ENCODE measurements at regions of chr2 and their contacts with region 1.

Region 1: DNA sequence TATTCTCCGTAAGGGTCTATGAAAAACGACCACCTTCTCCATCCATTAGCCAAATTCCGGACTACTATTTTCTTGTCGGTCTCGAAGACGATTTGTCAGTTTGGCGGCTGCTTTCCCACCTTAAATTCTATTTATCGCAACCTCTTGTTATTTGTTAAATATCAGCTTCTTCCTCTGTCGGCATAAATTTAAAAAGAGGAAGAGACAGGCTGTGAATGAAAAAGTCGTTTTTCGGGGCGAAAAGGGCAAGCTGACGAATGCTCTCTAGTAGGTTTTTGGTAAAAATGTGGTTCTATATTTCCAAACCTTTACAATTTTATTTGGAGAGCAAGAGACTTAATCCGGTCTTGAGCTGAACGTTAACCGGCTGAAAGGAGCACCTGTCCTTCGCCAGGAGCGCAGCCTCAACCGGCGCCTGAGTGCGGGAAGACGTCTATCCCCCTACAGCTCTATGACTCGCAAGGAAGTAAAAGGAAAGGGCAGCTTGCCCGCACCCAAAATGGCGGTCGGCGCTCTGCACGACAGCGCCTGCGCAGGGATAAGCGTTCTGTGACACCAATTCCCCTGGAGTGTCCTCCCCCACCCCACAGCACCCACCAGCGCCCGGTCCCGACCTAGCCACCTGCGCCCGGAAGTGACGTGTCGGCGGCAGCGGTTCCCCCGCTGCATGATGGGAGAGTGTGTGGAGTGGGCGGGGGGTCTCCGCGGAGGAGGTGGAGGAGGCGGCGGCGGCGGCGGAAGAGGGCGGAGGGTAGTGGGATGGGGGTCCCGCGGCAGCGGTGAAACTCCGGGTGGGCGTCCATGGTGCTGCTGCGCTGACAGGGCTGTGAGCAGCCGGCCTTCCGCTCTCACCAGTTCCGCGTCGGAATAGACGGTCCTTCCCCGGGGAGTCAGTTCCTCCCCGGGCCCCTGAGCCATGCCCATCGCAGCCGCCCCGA is at the start of gene AFTPH:
- DNase-seq: peak; percentile 100
- H3K4me3 ChIP-seq: peak within 1 kb of the TSS; percentile 93 to 98 (median 97)
- H3K27ac ChIP-seq: peak within 1 kb of the TSS; percentile 82
- H3K4me1 ChIP-seq: peaks cover 12% of the 10 kb centered on the region
- H3K27me3 ChIP-seq: peaks cover 7 to 8% of the 10 kb centered on the region in 2 experiments
- CTCF ChIP-seq: no peak
- POLR2A ChIP-seq: peak; percentile 46
- total RNA-seq, gene AFTPH: 15.3 and 16.7 TPM in 2 replicates

Region 2: DNA sequence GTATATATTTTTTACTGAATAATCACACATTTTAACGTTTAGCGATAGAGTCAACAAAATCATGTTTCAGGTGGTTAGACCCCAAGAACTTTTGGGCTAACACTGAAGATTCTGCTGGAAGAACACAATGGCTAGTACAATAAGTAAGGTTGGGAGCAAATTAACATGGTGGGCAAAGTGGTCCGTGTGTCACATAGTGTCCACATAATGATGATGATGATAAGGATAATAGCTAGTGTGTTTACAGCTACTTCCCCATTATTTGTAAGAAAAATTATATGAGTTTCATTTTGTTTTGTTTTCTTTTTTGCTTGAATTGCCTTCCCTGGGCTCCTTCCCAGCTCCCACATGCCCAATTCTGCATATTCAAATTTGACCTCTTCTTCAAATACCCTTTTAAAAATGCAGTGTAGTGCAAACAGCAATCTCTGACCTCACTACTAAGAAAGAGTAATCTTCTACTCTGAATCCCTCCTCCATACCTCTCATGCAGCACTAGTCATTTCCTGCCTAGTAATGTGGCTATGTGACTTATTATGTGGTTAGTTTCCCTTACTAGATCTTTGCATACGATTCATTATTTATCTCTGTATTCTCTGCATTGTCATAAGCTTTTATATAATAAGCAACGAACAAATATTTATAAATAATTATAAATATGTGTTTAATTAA is 487.8 kb before region 1 on chr2:
- CTCF ChIA-PET with region 1: no interaction called
- POLR2A ChIA-PET with region 1: no interaction called
- dilution Hi-C with region 1: no loop called
- intact Hi-C with region 1: loop called (anchors 10 kb)
- DNase-seq: peak; percentile 61
- H3K4me3 ChIP-seq: no peak overlapping the region
- H3K27ac ChIP-seq: no peak overlapping the region
- H3K4me1 ChIP-seq: peaks cover 15% of the 10 kb centered on the region
- H3K27me3 ChIP-seq: no peaks in the 10 kb centered on the region
- CTCF ChIP-seq: no peak
- POLR2A ChIP-seq: no peak

Region 3: GRCh38 chr2:64404002-64404731 is 119.8 kb before region 1 on chr2:
- CTCF ChIA-PET with region 1: no interaction called
- POLR2A ChIA-PET with region 1: no interaction called
- dilution Hi-C with region 1: no loop called
- intact Hi-C with region 1: loop called (anchors 1 kb)
- DNase-seq: peak; percentile 99
- H3K4me3 ChIP-seq: peak overlapping the region in 1 of 3 experiments; percentile 26
- H3K27ac ChIP-seq: peak overlapping the region; percentile 72
- H3K4me1 ChIP-seq: peaks cover 35% of the 10 kb centered on the region
- H3K27me3 ChIP-seq: peaks cover 7 to 17% of the 10 kb centered on the region in 2 experiments
- CTCF ChIP-seq: no peak
- POLR2A ChIP-seq: no peak

Region 4: DNA sequence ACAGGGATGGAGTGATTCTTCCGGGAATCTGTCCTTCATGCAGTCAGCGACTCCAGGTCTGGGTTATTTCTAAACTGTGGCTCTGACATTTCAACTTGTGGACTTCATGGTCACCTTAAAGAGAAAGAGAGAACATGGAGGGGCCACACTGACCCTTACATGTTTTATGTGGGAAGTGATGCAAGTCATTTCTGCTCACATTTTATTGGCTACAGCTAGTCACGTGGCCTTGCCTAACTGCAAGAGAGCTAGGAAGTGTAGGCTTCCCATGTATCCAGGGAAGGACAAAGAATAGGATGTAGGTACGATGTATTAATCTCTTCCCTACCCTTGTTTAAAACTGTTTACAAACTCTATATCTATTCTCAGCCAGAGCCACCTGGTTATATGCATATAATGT is 30.1 kb before region 1 on chr2:
- CTCF ChIA-PET with region 1: interaction called, 22 read pairs
- POLR2A ChIA-PET with region 1: no interaction called
- dilution Hi-C with region 1: no loop called
- intact Hi-C with region 1: loop called (anchors 2 kb)
- DNase-seq: no peak
- H3K4me3 ChIP-seq: no peak overlapping the region
- H3K27ac ChIP-seq: no peak overlapping the region
- H3K4me1 ChIP-seq: peaks cover 29% of the 10 kb centered on the region
- H3K27me3 ChIP-seq: peaks cover 20% of the 10 kb centered on the region in 2 experiments
- CTCF ChIP-seq: no peak
- POLR2A ChIP-seq: no peak

Region 5: DNA sequence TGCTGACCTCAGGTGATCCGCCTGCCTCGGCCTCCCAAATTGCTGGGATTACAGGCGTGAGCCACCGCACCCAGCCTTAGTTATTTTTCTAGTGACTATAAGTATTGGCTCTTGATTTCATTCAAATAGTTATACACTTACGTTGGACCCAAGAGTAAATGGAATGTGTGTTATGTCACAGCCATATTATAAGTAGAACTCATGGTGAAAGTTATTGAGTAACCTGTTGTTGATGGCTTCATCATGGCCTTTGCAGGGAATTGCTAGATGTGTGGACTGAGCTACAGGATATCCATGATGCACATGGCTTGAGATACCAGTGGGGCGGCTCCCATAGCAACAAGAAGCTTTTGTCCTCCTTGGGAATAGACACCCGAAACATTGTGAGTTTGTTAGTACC is 44.9 kb after region 1 on chr2:
- CTCF ChIA-PET with region 1: interaction called, 12 read pairs
- POLR2A ChIA-PET with region 1: no interaction called
- dilution Hi-C with region 1: no loop called
- intact Hi-C with region 1: no loop called
- DNase-seq: no peak
- H3K4me3 ChIP-seq: no peak overlapping the region
- H3K27ac ChIP-seq: no peak overlapping the region
- H3K4me1 ChIP-seq: no peaks in the 10 kb centered on the region
- H3K27me3 ChIP-seq: no peaks in the 10 kb centered on the region
- CTCF ChIP-seq: no peak
- POLR2A ChIP-seq: no peak

Region 6: GRCh38 chr2:64666810-64667438 is 143.0 kb after region 1 on chr2:
- CTCF ChIA-PET with region 1: no interaction called
- POLR2A ChIA-PET with region 1: no interaction called
- dilution Hi-C with region 1: no loop called
- intact Hi-C with region 1: no loop called
- DNase-seq: peak; percentile 50
- H3K4me3 ChIP-seq: no peak overlapping the region
- H3K27ac ChIP-seq: no peak overlapping the region
- H3K4me1 ChIP-seq: no peaks in the 10 kb centered on the region
- H3K27me3 ChIP-seq: no peaks in the 10 kb centered on the region
- CTCF ChIP-seq: no peak
- POLR2A ChIP-seq: no peak

Region 7: GRCh38 chr2:64831134-64831976 is 307.4 kb after region 1 on chr2:
- CTCF ChIA-PET with region 1: no interaction called
- POLR2A ChIA-PET with region 1: no interaction called
- dilution Hi-C with region 1: no loop called
- intact Hi-C with region 1: loop called (anchors 1 kb)
- DNase-seq: peak; percentile 91
- H3K4me3 ChIP-seq: no peak overlapping the region
- H3K27ac ChIP-seq: peak overlapping the region; percentile 86
- H3K4me1 ChIP-seq: peaks cover 20% of the 10 kb centered on the region
- H3K27me3 ChIP-seq: no peaks in the 10 kb centered on the region
- CTCF ChIP-seq: peak; percentile 88 to 93
- POLR2A ChIP-seq: peak; percentile 19

Region 8: DNA sequence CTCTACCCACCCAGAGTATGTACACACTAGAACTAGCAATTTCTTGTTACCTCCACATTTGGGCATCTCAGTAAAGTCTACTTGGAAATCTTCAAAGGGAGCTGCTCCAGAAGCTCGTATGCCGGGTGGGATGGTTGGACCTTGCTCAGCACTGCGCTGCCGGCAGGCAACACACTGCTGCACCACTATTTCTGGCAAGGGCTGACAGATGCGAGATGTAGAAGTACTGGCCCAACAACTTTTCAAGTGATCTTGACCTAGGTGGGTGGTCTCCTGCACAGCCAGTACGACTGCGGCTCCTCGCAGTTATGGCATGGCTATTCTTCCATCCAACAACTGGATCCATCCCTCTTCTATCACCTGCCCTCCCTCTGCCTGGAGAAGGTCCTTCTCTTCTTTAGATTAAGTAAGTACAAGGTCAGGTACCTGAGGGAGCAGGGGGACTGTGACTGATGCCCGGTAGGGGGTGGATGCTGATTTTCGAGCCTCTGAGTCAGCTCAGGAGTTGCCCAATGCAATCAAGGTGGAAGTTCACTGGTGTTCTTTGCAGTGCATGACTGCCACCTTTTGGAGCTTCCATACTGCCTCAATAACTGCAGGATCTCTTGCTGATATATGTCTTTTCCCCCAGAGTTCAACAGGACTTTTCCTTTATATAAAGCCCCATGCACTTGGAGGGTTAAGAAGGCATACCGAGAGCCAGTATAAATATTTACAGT is 364.8 kb after region 1 on chr2:
- CTCF ChIA-PET with region 1: interaction called, 17 read pairs
- POLR2A ChIA-PET with region 1: no interaction called
- dilution Hi-C with region 1: no loop called
- intact Hi-C with region 1: no loop called
- DNase-seq: peak; percentile 25
- H3K4me3 ChIP-seq: no peak overlapping the region
- H3K27ac ChIP-seq: no peak overlapping the region
- H3K4me1 ChIP-seq: no peaks in the 10 kb centered on the region
- H3K27me3 ChIP-seq: peaks cover 0 to 2% of the 10 kb centered on the region in 2 experiments
- CTCF ChIP-seq: peak in 1 of 2 donors; percentile 17
- POLR2A ChIP-seq: no peak

Measured in endothelial cell of umbilical vein (primary cell).